HCT116 (cell line): ENCODE measurements at regions of chr11 and their contacts with region 1.

Region 1: DNA sequence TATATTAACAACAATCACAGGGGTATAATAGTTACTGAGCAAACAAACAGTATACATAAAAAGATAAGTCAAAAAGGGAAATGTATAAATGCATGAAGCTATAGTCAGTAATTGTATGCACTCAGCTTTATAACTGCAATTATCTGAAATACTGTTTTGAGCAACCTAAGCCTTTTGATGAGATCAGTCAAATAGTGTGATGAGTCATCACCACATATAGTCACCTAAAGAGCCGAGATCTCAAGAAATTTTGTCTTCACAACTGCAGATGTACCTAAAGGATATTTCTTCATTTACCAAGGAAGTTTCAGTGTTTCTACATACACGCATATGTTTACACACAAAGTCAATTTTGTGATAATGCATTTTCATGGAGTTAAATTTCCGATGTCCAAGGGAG is 5.4 kb upstream of the OR51A2 start:
- DNase-seq: no peak
- ATAC-seq: no peak
- H3K4me3 ChIP-seq: no peak overlapping the region
- H3K27ac ChIP-seq: no peak overlapping the region
- H3K4me1 ChIP-seq: no peaks in the 10 kb centered on the region
- H3K27me3 ChIP-seq: peaks cover 39% of the 10 kb centered on the region
- CTCF ChIP-seq: no peak
- POLR2A ChIP-seq: no peak
- RAD21 ChIP-seq: no peak

Region 2: GRCh38 chr11:4881860-4882500 is 78.9 kb before region 1 on chr11 and contains the start of gene OR51T1:
- CTCF ChIA-PET with region 1: no interaction called
- POLR2A ChIA-PET with region 1: no interaction called
- RAD21 ChIA-PET with region 1: no interaction called
- intact Hi-C with region 1: no loop called
- DNase-seq: no peak
- ATAC-seq: no peak
- H3K4me3 ChIP-seq: no peak within 1 kb of the TSS
- H3K27ac ChIP-seq: no peak within 1 kb of the TSS
- H3K4me1 ChIP-seq: no peaks in the 10 kb centered on the region
- H3K27me3 ChIP-seq: peaks cover 15% of the 10 kb centered on the region
- CTCF ChIP-seq: no peak
- POLR2A ChIP-seq: no peak
- RAD21 ChIP-seq: no peak
- total RNA-seq, gene OR51T1: not detected

Region 3: GRCh38 chr11:4947505-4947904 is 13.4 kb before region 1 on chr11 and contains the start of gene OR51A4:
- CTCF ChIA-PET with region 1: no interaction called
- POLR2A ChIA-PET with region 1: no interaction called
- RAD21 ChIA-PET with region 1: no interaction called
- intact Hi-C with region 1: loop called (anchors 1 kb)
- DNase-seq: no peak
- ATAC-seq: no peak
- H3K4me3 ChIP-seq: no peak within 1 kb of the TSS
- H3K27ac ChIP-seq: no peak within 1 kb of the TSS
- H3K4me1 ChIP-seq: no peaks in the 10 kb centered on the region
- H3K27me3 ChIP-seq: peaks cover 15% of the 10 kb centered on the region
- CTCF ChIP-seq: no peak
- POLR2A ChIP-seq: no peak
- RAD21 ChIP-seq: no peak
- total RNA-seq, gene OR51A4: not detected